Heart left ventricle (tissue), 16 donors: ENCODE measurements at regions of chr2 and their contacts with region 1.

Region 1: DNA sequence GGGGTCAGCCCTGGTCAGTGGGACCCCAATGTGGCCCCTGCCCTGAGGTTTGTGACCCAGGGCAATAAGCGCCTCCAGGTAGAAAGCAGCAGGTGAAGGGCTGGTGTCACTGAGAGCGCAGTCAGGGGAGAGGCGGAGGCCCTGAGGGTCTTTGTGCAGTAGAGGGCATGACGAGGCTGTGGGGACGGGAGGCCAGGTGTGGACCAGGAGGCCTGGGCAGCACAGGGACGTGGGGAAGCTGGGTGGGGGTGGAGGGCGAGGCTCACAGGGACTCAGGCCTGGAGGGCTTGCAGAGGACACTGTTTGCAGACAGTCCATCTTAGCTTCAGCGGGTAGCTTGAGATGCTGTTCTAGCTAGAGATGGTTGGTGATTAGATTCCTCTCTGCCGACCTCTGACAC is 32.0 kb downstream of the TRAF3IP1 start:
- DNase-seq: no peak
- ATAC-seq: peak in 1 of 4 donors; percentile 15
- H3K4me3 ChIP-seq: no peak overlapping the region
- H3K27ac ChIP-seq: no peak overlapping the region
- H3K4me1 ChIP-seq: no peaks in the 10 kb centered on the region
- H3K27me3 ChIP-seq: no peaks in the 10 kb centered on the region
- CTCF ChIP-seq: no peak
- POLR2A ChIP-seq: no peak

Region 2: GRCh38 chr2:238326801-238327365 is 25.5 kb before region 1 on chr2:
- intact Hi-C with region 1: no loop called
- DNase-seq: no peak
- ATAC-seq: no peak
- H3K4me3 ChIP-seq: no peak overlapping the region
- H3K27ac ChIP-seq: no peak overlapping the region
- H3K4me1 ChIP-seq: peaks cover 0 to 13% (median 4%) of the 10 kb centered on the region in 12 donors
- H3K27me3 ChIP-seq: no peaks in the 10 kb centered on the region
- CTCF ChIP-seq: no peak
- POLR2A ChIP-seq: no peak

Region 3: GRCh38 chr2:238970553-238971081 is 618.3 kb after region 1 on chr2:
- intact Hi-C with region 1: loop called in 2 of 10 experiments (anchors 10 kb)
- DNase-seq: peak in 4 of 5 donors; percentile 35 to 76 (median 50)
- ATAC-seq: peak; percentile 49 to 84 (median 78)
- H3K4me3 ChIP-seq: no peak overlapping the region
- H3K27ac ChIP-seq: no peak overlapping the region
- H3K4me1 ChIP-seq: no peaks in the 10 kb centered on the region
- H3K27me3 ChIP-seq: peaks cover 0 to 20% (median 4%) of the 10 kb centered on the region in 9 donors
- CTCF ChIP-seq: peak; percentile 91 to 99 (median 98)
- POLR2A ChIP-seq: no peak